Heart right ventricle (tissue), 16 donors: ENCODE measurements at regions of chr9 and their contacts with region 1.

Region 1: DNA sequence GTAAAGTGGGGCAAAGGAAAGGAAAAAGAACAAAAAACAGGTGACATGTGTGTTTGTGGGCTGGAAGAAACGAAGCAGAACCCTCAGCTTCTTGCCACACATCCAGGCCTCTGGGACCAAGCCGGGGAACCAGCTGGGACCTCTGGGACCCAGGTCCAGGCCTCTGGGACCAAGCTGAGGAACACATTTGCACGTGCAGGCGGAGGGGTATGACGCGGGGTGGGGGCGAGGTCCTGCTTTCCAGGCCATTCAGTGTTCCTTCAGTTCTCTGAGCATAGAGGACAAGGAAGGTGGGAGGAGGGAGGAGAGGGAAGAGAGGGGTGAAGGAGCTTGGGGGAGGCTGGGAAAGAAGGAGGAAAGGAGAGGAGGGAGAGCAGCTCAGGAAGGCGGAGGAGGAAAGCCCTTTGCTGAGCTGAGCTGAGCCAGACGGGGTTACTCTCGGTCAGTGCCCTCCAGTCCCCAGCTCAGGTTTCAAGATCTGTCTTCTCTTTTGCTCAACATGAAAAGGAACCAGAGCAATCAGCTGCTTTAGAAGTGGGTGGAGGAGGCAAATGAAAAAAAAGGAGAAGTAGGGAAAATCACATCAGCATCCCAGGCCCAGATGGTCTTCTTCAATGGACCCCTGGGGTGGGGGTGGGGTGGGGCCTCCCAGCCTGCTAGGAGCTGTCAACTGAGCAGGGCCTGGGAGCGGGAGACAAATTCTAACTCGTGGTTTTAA is 59.1 kb downstream of the ABCA1 start:
- DNase-seq: peak; percentile 52 to 69
- ATAC-seq: peak; percentile 88 to 92 (median 90)
- H3K4me3 ChIP-seq: no peak overlapping the region
- H3K27ac ChIP-seq: peak overlapping the region in 9 of 10 donors; percentile 30 to 82 (median 70)
- H3K4me1 ChIP-seq: peaks cover 22 to 84% (median 51%) of the 10 kb centered on the region in 9 donors
- H3K27me3 ChIP-seq: no peaks in the 10 kb centered on the region
- CTCF ChIP-seq: no peak

Region 2: GRCh38 chr9:104911032-104911607 is 42.3 kb after region 1 on chr9:
- intact Hi-C with region 1: loop called in 2 of 10 experiments (anchors 5 kb)
- DNase-seq: no peak
- ATAC-seq: no peak
- H3K4me3 ChIP-seq: no peak overlapping the region
- H3K27ac ChIP-seq: peak overlapping the region in 2 of 10 donors; percentile 10 to 11
- H3K4me1 ChIP-seq: peaks cover 19 to 97% (median 75%) of the 10 kb centered on the region in 9 donors
- H3K27me3 ChIP-seq: no peaks in the 10 kb centered on the region
- CTCF ChIP-seq: no peak